ENCODE measurements at regions of chr14 and their contacts with region 1.

Region 1: GRCh38 chr14:36553656-36554260 is 28.7 kb downstream of the NKX2-8 start:
- DNase-seq: no peak
- ATAC-seq: peak in 1 of 4 donors; percentile 36
- H3K4me3 ChIP-seq: no peak overlapping the region
- H3K27ac ChIP-seq: no peak overlapping the region
- H3K4me1 ChIP-seq: no peaks in the 10 kb centered on the region
- H3K27me3 ChIP-seq: peaks cover 0 to 24% (median 0%) of the 10 kb centered on the region in 9 donors
- CTCF ChIP-seq: peak; percentile 43 to 73 (median 63)
- POLR2A ChIP-seq: no peak

Region 2: GRCh38 chr14:36070031-36070719 is 483.6 kb before region 1 on chr14:
- intact Hi-C with region 1: loop called in 5 of 10 experiments (anchors 5 to 10 kb)
- DNase-seq: peak in 4 of 5 donors; percentile 18 to 63 (median 37)
- ATAC-seq: peak in 3 of 4 donors; percentile 60 to 66 (median 64)
- H3K4me3 ChIP-seq: no peak overlapping the region
- H3K27ac ChIP-seq: no peak overlapping the region
- H3K4me1 ChIP-seq: peaks cover 0 to 4% (median 0%) of the 10 kb centered on the region in 12 donors
- H3K27me3 ChIP-seq: peaks cover 0 to 36% (median 4%) of the 10 kb centered on the region in 9 donors
- CTCF ChIP-seq: peak in 11 of 12 donors; percentile 27 to 63 (median 43)
- POLR2A ChIP-seq: no peak

Region 3: GRCh38 chr14:36570065-36570464 is 16.3 kb after region 1 on chr14:
- intact Hi-C with region 1: no loop called
- DNase-seq: no peak
- ATAC-seq: no peak
- H3K4me3 ChIP-seq: no peak overlapping the region
- H3K27ac ChIP-seq: no peak overlapping the region
- H3K4me1 ChIP-seq: no peaks in the 10 kb centered on the region
- H3K27me3 ChIP-seq: peaks cover 0 to 43% (median 16%) of the 10 kb centered on the region in 9 donors
- CTCF ChIP-seq: no peak
- POLR2A ChIP-seq: no peak

Region 4: DNA sequence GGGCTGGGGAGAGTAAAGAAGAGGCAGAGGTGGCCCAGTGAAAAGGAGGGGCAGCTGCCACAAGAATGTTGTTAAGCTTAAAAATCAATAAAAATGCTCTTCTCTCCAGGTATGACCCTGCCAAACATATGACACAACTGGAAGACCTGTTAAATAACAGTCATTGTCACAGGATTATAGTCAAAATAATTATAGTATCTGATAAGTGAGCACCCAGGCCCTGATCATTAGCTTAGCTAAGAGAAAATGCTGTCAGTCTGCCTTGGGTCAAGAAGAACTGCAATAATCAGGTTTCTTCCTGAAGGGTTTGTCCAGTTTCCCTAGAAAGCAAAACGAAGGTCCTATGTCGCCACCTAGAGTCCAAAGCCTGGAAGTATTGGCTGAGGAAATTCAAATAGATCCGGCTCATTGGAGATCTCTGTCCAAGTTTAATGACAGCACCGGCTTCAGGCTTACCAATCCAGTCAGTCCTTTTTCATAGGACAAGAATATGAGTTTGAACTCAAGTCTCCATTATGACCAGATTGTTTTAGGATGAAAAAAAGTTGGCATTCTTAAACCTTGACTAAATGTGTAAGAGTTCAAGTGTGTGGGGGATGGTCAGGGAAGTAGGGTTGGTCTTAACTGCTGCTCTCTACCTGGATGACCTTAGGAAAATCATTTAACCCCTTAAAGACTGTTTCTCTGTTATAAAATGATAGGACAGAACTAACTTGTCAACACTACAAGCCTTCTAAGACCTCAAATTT is 51.2 kb after region 1 on chr14:
- intact Hi-C with region 1: loop called in 8 of 10 experiments (anchors 2 to 10 kb)
- DNase-seq: peak in 2 of 5 donors; percentile 20 to 23
- ATAC-seq: peak in 1 of 4 donors; percentile 51
- H3K4me3 ChIP-seq: no peak overlapping the region
- H3K27ac ChIP-seq: no peak overlapping the region
- H3K4me1 ChIP-seq: no peaks in the 10 kb centered on the region
- H3K27me3 ChIP-seq: peaks cover 0 to 37% (median 7%) of the 10 kb centered on the region in 9 donors
- CTCF ChIP-seq: peak; percentile 67 to 86 (median 72)
- POLR2A ChIP-seq: no peak

Region 5: DNA sequence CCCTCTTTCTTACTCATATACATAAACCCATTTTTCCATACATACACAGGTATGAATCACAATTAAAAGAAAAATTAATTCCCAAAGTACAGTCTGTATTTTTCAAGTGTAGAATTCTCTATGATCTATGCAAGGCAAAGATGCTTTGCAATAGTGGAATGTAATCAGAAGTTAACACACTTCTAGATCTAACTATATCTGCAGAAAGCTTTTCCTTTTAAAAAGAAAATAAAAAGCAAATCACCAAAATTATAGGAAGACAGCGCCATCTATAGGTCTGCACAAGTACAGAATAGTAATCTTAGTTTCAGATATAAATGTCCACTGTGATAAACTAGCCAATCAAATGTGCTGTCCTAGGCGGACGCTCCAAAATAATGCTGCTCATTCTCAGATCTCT is 596.7 kb after region 1 on chr14:
- intact Hi-C with region 1: loop called in 3 of 10 experiments (anchors 5 to 10 kb)
- DNase-seq: no peak
- ATAC-seq: no peak
- H3K4me3 ChIP-seq: no peak overlapping the region
- H3K27ac ChIP-seq: no peak overlapping the region
- H3K4me1 ChIP-seq: no peaks in the 10 kb centered on the region
- H3K27me3 ChIP-seq: no peaks in the 10 kb centered on the region
- CTCF ChIP-seq: peak; percentile 53 to 79 (median 68)
- POLR2A ChIP-seq: no peak